ENCODE measurements at regions of chr17 and their contacts with region 1.

Region 1: GRCh38 chr17:75779231-75779986 is 5.2 kb upstream of the UNK start:
- DNase-seq: peak; percentile 95

Region 2: DNA sequence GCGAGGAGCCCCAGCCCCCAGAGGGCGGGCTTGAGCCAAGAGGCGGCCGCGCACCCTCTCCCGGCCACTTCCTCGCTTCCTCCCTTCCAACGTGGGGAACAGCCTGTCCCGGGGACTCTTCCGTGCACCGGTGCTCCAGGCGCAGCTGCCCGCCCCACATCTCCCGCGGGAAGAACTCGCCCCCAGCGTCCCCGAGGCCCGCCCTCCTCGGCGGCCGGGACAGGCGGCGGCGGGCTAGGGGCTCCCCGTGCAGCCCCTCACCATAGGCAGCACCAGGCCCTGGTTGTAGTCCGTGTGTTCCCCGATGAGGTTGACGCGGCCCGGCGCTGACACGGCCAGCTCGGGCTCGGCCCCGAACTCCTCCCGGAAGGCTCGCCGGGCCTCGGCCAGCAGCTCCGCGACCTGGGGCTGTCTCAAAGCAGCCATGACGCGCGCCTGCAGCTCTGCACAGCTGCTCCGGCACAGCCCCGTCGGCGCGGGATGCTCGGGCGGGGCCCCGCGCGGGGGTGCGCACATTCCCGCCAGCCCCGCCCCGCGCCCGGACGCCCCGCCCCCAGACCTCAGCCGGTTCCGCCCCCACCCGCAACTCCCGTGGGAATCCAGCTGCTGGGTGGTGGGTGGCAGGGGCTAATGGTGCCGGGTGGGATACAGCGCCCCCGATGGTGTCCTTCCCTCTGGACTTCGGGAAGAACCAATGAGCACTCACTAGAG is 14.5 kb before region 1 on chr17 and contains the start of gene GALK1:
- CTCF ChIA-PET with region 1: interaction called, 19 read pairs
- POLR2A ChIA-PET with region 1: interaction called, 206 read pairs
- DNase-seq: peak; percentile 83

Region 3: DNA sequence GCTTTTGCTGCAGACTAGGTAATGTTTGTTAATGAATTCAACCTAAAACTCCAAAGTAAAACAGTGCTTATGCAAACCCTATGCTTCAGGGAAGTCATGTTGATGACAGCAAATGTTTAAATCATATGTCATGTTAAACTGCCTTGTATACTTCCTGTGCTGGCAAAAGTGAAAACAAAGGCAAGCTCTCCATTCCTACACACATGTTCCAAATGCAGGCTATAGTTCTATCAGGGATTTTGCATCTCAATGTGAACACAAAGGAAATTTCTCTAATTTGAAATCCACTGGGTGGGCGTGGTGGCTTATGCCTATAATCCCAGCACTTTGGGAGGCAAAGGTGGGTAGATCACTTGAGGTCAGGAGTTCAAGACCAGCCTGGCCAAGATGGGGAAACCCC is 24.5 kb after region 1 on chr17:
- CTCF ChIA-PET with region 1: interaction called, 4 read pairs
- POLR2A ChIA-PET with region 1: interaction called, 19 read pairs
- DNase-seq: no peak

Region 4: GRCh38 chr17:75814900-75815373 is 35.5 kb after region 1 on chr17:
- CTCF ChIA-PET with region 1: no interaction called
- POLR2A ChIA-PET with region 1: interaction called, 20 read pairs
- DNase-seq: no peak

Region 5: GRCh38 chr17:75845049-75845860 is 65.8 kb after region 1 on chr17:
- CTCF ChIA-PET with region 1: no interaction called
- POLR2A ChIA-PET with region 1: interaction called, 22 read pairs
- DNase-seq: peak; percentile 88

Region 6: GRCh38 chr17:75933808-75934207 is 154.4 kb after region 1 on chr17:
- CTCF ChIA-PET with region 1: no interaction called
- POLR2A ChIA-PET with region 1: no interaction called
- DNase-seq: no peak